Right cardiac atrium (tissue), 5 donors: ENCODE measurements at regions of chr1 and their contacts with region 1.

Region 1: DNA sequence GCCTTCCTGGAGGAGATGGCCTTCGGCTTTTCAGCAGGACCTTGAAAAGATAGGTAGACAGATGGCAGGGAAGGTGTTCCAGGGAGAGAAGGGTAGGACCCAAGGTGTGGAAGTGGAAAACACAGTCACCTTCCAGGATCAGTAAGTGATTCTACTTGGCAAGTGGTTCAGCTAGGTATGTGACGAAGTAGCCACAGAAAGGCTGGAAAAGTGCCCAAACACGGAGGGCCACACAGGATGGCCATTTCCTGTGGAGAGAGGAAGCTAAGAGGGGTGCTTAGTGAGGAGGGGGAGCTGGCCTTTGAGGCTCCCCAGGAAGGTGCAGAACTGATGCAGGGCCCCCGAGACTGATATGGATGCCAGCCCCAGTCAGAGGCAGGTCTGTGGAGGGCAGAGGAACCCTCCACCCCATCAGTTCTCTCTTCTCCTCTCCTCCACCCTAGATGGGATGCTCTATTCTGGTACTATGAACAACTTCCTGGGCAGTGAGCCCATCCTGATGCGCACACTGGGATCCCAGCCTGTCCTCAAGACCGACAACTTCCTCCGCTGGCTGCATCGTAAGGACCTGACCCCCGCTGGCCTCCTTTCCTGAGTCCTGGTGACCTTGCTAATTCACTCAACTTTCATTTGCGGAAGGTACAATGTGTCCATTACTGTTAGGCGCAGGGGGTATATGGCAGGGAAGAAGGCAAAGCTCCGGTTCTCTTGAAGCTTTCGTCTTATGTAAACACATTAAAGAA is 6.8 kb downstream of the SEMA4A start:
- DNase-seq: peak; percentile 67 to 81 (median 69)
- ATAC-seq: peak; percentile 47 to 73
- H3K4me3 ChIP-seq: peak overlapping the region; percentile 48
- H3K27ac ChIP-seq: peak overlapping the region; percentile 97
- H3K4me1 ChIP-seq: peaks cover 7% of the 10 kb centered on the region
- H3K27me3 ChIP-seq: no peaks in the 10 kb centered on the region

Region 2: DNA sequence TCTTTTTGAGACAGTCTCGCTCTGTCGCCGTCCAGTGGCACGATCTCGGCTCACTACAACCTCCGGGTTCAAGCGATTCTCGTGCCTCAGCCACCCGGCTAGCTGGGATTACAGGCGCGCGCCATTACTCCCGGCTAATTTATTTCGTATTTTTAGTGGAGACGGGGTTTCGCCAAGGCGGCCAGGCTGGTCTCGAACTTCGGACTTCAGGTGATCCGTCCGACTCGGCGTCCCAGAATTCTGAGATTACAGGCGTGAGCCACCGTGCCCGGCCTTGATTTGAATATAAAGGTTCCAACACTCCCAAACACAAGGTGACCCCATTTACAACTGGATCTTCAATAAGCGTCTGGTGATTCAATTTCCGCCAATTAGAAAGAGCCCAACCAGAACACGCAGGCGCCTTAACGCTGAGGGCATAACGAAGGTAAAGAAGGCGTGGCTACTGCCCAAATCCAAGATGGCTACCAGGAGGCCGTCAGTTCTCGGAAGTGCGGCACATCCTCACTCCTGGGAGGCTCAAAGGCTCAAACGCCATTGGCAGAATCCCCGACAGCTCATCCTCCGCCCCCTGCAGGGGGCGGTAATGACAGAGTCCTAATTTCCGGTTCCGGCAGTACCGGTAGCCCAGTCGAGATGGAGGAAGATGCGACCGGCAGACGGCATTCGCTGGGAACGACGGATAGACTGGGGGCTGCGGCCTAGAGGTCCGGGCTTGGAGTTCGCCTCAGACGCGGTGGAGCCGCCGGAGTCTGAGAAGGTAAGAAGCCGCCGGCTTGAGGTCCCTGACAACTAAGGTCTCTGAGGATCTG is 33.5 kb after region 1 on chr1 and contains the start of gene SLC25A44:
- intact Hi-C with region 1: loop called in 1 of 4 experiments (anchors 2 kb)
- DNase-seq: peak; percentile 96 to 98 (median 97)
- ATAC-seq: peak; percentile 100
- H3K4me3 ChIP-seq: peak within 1 kb of the TSS; percentile 90
- H3K27ac ChIP-seq: peak within 1 kb of the TSS; percentile 91
- H3K4me1 ChIP-seq: peaks cover 6% of the 10 kb centered on the region
- H3K27me3 ChIP-seq: no peaks in the 10 kb centered on the region
- total RNA-seq, gene SLC25A44: 14.2 to 21.5 (median 15.7) TPM

Region 3: GRCh38 chr1:156204686-156205085 is 44.5 kb after region 1 on chr1:
- intact Hi-C with region 1: loop called in 1 of 4 experiments (anchors 5 kb)
- DNase-seq: no peak
- ATAC-seq: no peak
- H3K4me3 ChIP-seq: no peak overlapping the region
- H3K27ac ChIP-seq: no peak overlapping the region
- H3K4me1 ChIP-seq: peaks cover 3% of the 10 kb centered on the region
- H3K27me3 ChIP-seq: no peaks in the 10 kb centered on the region